ENCODE measurements at regions of chr16 and their contacts with region 1.

Region 1: GRCh38 chr16:9008601-9009260 is 45.0 kb upstream of the USP7 start:
- DNase-seq: peak; percentile 59
- H3K4me3 ChIP-seq: peak overlapping the region in 1 of 3 experiments; percentile 3
- H3K27ac ChIP-seq: no peak overlapping the region
- H3K4me1 ChIP-seq: peaks cover 4% of the 10 kb centered on the region
- H3K27me3 ChIP-seq: no peaks in the 10 kb centered on the region
- CTCF ChIP-seq: peak; percentile 70 to 90
- POLR2A ChIP-seq: no peak

Region 2: DNA sequence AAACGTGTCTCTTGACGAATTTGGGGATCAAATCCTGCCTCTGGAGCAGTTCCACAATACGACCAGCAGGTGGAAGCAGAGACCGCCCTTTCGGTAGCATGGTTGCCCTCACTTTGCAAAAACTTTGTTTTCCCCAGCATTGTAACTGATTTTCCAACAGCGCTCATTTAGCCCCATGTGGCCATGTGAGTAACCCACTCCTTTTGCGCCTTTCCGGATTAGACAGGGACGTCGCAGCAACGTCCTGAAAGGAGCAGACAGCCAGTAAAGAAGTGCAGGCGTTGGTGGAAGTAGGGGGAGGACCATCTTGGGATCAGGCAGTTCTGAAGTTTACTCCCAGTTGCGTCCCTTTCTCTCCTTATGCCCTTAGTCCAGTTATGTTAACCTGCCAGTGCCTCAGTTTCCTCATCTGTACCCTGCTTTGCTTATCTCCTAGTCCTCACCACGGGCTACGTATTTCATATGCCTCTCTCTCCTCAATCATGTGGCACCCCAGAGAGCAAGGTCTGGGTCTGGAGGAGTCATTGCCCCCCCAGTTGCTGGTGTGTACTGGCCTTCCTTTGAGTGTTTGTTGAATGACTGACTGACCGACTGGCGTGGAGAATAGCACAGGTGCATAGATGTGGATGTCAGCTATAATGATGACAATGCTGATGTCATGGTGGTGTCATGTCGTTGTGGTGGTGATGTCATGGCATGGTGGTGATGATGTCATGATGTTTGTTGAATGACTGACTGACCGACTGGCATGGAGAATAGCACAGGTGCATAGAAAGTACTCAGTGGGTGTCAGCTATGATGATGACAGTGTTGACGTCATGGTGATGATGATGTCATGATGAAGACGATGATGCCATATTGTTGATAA is 440.7 kb before region 1 on chr16:
- CTCF ChIA-PET with region 1: interaction called, 5 read pairs
- POLR2A ChIA-PET with region 1: no interaction called
- dilution Hi-C with region 1: no loop called
- intact Hi-C with region 1: loop called (anchors 2 kb)
- DNase-seq: peak; percentile 85
- H3K4me3 ChIP-seq: no peak overlapping the region
- H3K27ac ChIP-seq: no peak overlapping the region
- H3K4me1 ChIP-seq: no peaks in the 10 kb centered on the region
- H3K27me3 ChIP-seq: peaks cover 2 to 3% of the 10 kb centered on the region in 2 experiments
- CTCF ChIP-seq: peak; percentile 87 to 97
- POLR2A ChIP-seq: no peak

Region 3: GRCh38 chr16:8729779-8730334 is 278.9 kb before region 1 on chr16:
- CTCF ChIA-PET with region 1: no interaction called
- POLR2A ChIA-PET with region 1: no interaction called
- dilution Hi-C with region 1: no loop called
- intact Hi-C with region 1: no loop called
- DNase-seq: no peak
- H3K4me3 ChIP-seq: no peak overlapping the region
- H3K27ac ChIP-seq: no peak overlapping the region
- H3K4me1 ChIP-seq: no peaks in the 10 kb centered on the region
- H3K27me3 ChIP-seq: no peaks in the 10 kb centered on the region
- CTCF ChIP-seq: no peak
- POLR2A ChIP-seq: no peak

Region 4: GRCh38 chr16:8885674-8886592 is 122.8 kb before region 1 on chr16:
- CTCF ChIA-PET with region 1: interaction called, 23 read pairs
- POLR2A ChIA-PET with region 1: no interaction called
- dilution Hi-C with region 1: no loop called
- intact Hi-C with region 1: loop called (anchors 5 kb)
- DNase-seq: peak; percentile 48
- H3K4me3 ChIP-seq: no peak overlapping the region
- H3K27ac ChIP-seq: no peak overlapping the region
- H3K4me1 ChIP-seq: peaks cover 12% of the 10 kb centered on the region
- H3K27me3 ChIP-seq: no peaks in the 10 kb centered on the region
- CTCF ChIP-seq: peak; percentile 15 to 19
- POLR2A ChIP-seq: no peak

Region 5: GRCh38 chr16:8924214-8924613 is 84.5 kb before region 1 on chr16:
- CTCF ChIA-PET with region 1: interaction called, 11 read pairs
- POLR2A ChIA-PET with region 1: no interaction called
- dilution Hi-C with region 1: no loop called
- intact Hi-C with region 1: no loop called
- DNase-seq: no peak
- H3K4me3 ChIP-seq: no peak overlapping the region
- H3K27ac ChIP-seq: no peak overlapping the region
- H3K4me1 ChIP-seq: no peaks in the 10 kb centered on the region
- H3K27me3 ChIP-seq: no peaks in the 10 kb centered on the region
- CTCF ChIP-seq: no peak
- POLR2A ChIP-seq: no peak

Region 6: DNA sequence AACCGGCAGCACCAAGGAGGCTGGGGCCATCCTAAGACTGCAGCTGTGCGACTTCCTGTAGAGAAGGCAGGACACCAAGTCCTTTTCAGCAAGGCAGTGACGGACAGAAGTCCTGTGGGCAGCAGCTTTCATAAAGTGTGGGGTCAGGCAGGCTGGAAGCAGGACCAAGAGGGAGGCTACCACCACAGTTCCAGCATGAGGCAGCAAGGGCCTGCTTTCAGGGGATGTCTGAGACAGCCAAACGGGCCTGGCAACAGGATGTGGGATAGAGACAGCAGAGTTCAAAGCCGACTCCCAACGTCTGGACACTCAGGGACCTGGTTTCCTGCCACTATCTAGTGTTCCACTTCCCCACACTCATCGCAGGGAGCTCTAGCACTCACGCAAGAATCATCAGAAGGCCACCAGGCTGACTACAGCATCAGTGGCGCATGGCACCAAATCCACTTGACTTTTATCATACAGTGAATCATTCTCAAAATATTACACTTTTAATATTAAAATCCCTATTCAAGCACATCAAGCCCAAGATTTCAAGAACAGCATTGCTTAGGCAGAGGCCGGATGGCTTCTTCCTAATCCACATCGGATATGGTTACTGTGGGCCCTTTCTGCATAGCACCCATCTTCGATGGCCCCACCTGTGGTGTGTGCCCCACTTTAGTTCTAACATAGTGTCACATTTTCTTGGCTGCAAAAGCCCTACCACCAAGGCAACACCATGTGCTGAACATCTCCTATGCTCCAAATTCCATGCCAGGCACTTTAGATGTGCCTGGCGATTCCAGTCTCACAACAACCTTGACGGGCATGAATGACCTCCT is 50.2 kb before region 1 on chr16:
- CTCF ChIA-PET with region 1: interaction called, 10 read pairs
- POLR2A ChIA-PET with region 1: no interaction called
- dilution Hi-C with region 1: no loop called
- intact Hi-C with region 1: loop called (anchors 2 kb)
- DNase-seq: peak; percentile 54
- H3K4me3 ChIP-seq: no peak overlapping the region
- H3K27ac ChIP-seq: peak overlapping the region; percentile 70
- H3K4me1 ChIP-seq: peaks cover 46% of the 10 kb centered on the region
- H3K27me3 ChIP-seq: no peaks in the 10 kb centered on the region
- CTCF ChIP-seq: no peak
- POLR2A ChIP-seq: no peak

Region 7: GRCh38 chr16:8998114-8998513 is 10.6 kb before region 1 on chr16:
- CTCF ChIA-PET with region 1: interaction called, 30 read pairs
- POLR2A ChIA-PET with region 1: no interaction called
- dilution Hi-C with region 1: no loop called
- intact Hi-C with region 1: no loop called
- DNase-seq: no peak
- H3K4me3 ChIP-seq: no peak overlapping the region
- H3K27ac ChIP-seq: no peak overlapping the region
- H3K4me1 ChIP-seq: no peaks in the 10 kb centered on the region
- H3K27me3 ChIP-seq: no peaks in the 10 kb centered on the region
- CTCF ChIP-seq: no peak
- POLR2A ChIP-seq: no peak

Region 8: DNA sequence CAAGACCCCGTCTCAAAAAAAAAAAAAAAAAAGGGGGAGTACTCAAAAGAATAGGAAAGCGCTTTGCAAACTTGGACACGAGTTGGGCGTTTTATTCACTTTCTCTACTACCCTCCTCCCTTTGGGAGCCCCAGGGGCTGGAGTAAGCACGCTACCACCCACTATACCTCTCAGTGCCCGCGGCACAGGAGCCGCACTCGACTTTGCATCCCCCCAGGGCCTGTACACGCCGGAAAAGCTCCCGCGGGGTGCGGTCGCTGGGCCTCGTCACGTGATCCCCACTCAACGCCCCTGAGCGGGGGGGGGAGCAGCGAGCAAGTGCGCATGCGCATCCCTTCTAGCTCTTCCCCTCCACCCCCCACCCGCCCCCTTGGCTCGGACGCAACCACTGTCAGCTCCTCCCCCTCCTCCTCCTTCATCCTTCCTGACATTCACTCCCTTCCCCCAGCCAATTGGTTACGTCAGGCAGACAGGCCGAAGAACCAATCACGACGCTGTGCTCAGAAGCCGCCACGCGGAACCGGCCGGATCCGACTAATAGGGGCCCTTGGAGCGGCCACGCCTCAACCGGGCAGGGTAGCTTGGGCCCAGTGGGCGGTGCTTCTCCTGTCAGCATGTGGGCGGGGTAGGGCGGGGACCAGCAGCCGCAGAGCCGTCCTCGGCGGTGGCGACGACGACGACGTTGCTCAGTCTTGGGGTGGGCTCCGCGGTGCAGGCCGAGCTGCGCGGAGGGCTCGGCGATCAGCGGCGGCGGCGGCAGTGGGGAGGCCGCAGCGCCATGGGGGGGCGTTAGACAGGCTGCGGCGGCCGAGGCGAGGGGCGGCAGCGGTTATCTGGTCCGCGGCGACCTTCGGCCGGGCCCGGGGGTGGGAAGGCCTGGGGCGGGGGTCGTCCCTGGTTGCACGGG is 82.5 kb after region 1 on chr16 and contains the start of gene HAPSTR1:
- CTCF ChIA-PET with region 1: interaction called, 12 read pairs
- POLR2A ChIA-PET with region 1: interaction called, 4 read pairs
- dilution Hi-C with region 1: no loop called
- intact Hi-C with region 1: loop called (anchors 2 kb)
- DNase-seq: peak; percentile 100
- H3K4me3 ChIP-seq: peak within 1 kb of the TSS; percentile 73 to 89 (median 80)
- H3K27ac ChIP-seq: peak within 1 kb of the TSS; percentile 78
- H3K4me1 ChIP-seq: peaks cover 32% of the 10 kb centered on the region
- H3K27me3 ChIP-seq: no peaks in the 10 kb centered on the region
- CTCF ChIP-seq: no peak
- POLR2A ChIP-seq: peak; percentile 96
- total RNA-seq, gene HAPSTR1: 60.1 and 63.7 TPM in 2 replicates

Region 9: GRCh38 chr16:9415548-9415947 is 406.8 kb after region 1 on chr16:
- CTCF ChIA-PET with region 1: no interaction called
- POLR2A ChIA-PET with region 1: no interaction called
- dilution Hi-C with region 1: no loop called
- intact Hi-C with region 1: no loop called
- DNase-seq: no peak
- H3K4me3 ChIP-seq: no peak overlapping the region
- H3K27ac ChIP-seq: no peak overlapping the region
- H3K4me1 ChIP-seq: no peaks in the 10 kb centered on the region
- H3K27me3 ChIP-seq: no peaks in the 10 kb centered on the region
- CTCF ChIP-seq: no peak
- POLR2A ChIP-seq: no peak